ENCODE measurements at regions of chr11 and their contacts with region 1.

Region 1: GRCh38 chr11:119023741-119024140 is 5.2 kb downstream of the TRAPPC4 start:
- DNase-seq: no peak
- ATAC-seq: no peak
- H3K4me3 ChIP-seq: no peak overlapping the region
- H3K27ac ChIP-seq: no peak overlapping the region
- H3K4me1 ChIP-seq: peaks cover 4% of the 10 kb centered on the region
- H3K27me3 ChIP-seq: no peaks in the 10 kb centered on the region
- CTCF ChIP-seq: no peak
- EP300 ChIP-seq: no peak
- POLR2A ChIP-seq: no peak
- RAD21 ChIP-seq: no peak

Region 2: DNA sequence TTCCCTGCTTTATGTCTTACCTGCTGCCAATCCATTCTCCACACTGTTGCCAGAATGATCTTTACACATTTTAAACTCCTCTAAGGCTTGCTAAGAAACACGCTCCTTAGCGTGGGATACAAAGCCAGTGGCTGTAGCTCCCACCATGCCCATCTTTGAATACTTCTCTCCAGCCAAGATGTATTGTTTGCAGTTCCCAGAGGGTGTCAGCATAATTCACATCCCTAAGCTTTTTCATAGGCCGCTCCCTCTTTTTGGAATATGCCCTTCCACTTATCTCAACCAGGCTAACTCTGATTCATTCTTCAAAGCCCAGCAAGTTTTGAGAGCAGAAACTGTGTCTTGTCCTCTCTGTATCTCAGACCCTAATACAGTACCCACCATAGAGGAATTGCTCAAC is 75.7 kb before region 1 on chr11:
- CTCF ChIA-PET with region 1: no interaction called
- POLR2A ChIA-PET with region 1: no interaction called
- RAD21 ChIA-PET with region 1: no interaction called
- SMC1A ChIA-PET with region 1: no interaction called
- in situ Hi-C with region 1: no loop called
- intact Hi-C with region 1: no loop called
- DNase-seq: no peak
- ATAC-seq: no peak
- H3K4me3 ChIP-seq: no peak overlapping the region
- H3K27ac ChIP-seq: no peak overlapping the region
- H3K4me1 ChIP-seq: no peaks in the 10 kb centered on the region
- H3K27me3 ChIP-seq: peaks cover 0 to 7% of the 10 kb centered on the region in 2 experiments; a peak in 2 of 4 replicates
- CTCF ChIP-seq: no peak
- EP300 ChIP-seq: no peak
- POLR2A ChIP-seq: no peak
- RAD21 ChIP-seq: no peak

Region 3: DNA sequence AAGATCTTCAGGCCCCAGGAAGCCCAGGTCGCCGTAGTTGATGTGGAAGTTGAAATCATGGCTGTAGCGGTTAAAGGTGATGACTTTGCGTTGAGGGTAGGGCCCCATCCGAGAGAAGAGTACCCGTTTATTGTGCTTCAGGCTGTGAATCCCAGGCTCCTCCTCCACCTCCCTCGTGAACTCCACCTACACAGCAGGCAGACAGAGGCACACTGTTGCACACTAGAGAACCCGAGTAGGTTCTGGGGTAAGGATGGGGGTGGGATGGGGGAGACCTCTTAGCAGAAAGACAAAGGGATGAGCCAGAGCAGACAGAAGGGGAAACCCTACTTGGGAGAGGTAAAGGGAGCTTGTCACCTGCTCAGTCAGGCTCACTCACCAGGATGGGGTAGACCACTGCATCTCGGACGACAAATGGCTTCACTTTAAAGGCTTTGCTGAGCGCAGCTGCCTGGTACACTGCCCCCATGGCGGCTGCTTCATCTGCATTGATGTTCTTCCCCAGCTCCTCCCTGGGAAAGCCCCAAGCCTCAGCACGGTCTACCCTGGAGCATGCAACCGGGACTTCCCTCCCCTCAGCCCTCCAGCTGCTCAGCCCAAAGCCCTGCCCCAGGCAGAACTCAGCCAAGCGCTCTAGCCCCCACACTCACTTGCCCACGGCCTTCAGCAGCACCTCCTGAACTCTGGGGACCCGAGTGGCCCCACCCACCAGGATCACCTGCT is 27.9 kb after region 1 on chr11:
- CTCF ChIA-PET with region 1: interaction called, 16 read pairs
- POLR2A ChIA-PET with region 1: interaction called, 14 read pairs
- RAD21 ChIA-PET with region 1: interaction called, 5 read pairs
- SMC1A ChIA-PET with region 1: no interaction called
- in situ Hi-C with region 1: no loop called
- intact Hi-C with region 1: loop called (anchors 2 kb)
- DNase-seq: peak; percentile 51
- ATAC-seq: peak; percentile 88
- H3K4me3 ChIP-seq: peak overlapping the region; percentile 43; the same call in 1 of the 2 replicates
- H3K27ac ChIP-seq: peak overlapping the region; percentile 71
- H3K4me1 ChIP-seq: peaks cover 33% of the 10 kb centered on the region
- H3K27me3 ChIP-seq: no peaks in the 10 kb centered on the region
- CTCF ChIP-seq: no peak
- EP300 ChIP-seq: no peak
- POLR2A ChIP-seq: peak; percentile 73
- RAD21 ChIP-seq: no peak

Region 4: DNA sequence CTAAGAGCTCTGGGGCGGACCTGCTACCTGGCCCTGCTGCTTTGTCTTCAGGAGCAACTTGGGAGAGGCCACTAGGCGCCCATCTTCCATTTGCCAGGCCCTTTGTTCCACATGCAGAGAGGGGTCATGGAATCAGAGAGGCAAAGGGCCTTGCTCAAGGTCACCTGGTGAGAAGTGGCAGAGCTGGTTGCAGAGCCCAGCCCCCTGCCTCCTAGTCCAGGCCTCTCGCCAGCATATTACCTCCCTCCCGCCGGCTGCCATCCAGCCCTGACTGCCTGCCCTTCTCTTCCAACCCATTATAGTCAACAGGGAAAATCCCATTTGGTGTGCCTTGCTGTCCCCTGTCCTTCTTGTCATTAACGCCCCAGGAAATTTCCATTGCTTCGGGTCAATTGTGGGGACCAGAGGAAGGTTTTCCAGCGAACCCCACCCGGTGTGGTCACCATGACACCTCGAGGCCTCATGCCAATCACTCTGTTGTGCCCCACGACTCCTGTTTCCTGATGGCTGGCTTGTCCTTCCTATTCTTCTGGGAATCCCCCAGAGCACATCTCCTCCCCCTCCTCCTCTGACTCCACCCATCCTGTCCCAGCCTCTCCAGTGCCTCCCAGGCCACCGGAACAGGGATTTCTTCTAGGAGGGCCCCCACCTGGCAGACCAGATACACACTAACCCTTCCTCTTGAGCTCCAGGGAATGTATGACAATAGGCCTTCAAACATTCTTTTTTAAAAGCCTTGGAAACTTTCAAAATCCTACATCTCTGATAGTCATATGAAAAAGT is 628.3 kb after region 1 on chr11:
- CTCF ChIA-PET with region 1: no interaction called
- POLR2A ChIA-PET with region 1: no interaction called
- RAD21 ChIA-PET with region 1: no interaction called
- SMC1A ChIA-PET with region 1: no interaction called
- in situ Hi-C with region 1: no loop called
- intact Hi-C with region 1: no loop called
- DNase-seq: no peak
- ATAC-seq: no peak
- H3K4me3 ChIP-seq: no peak overlapping the region
- H3K27ac ChIP-seq: no peak overlapping the region
- H3K4me1 ChIP-seq: no peaks in the 10 kb centered on the region
- H3K27me3 ChIP-seq: no peaks in the 10 kb centered on the region
- CTCF ChIP-seq: no peak
- EP300 ChIP-seq: no peak
- POLR2A ChIP-seq: no peak
- RAD21 ChIP-seq: no peak

Measured in GM12878 (cell line).